ENCODE measurements at regions of chr5 and their contacts with region 1.

Region 1: DNA sequence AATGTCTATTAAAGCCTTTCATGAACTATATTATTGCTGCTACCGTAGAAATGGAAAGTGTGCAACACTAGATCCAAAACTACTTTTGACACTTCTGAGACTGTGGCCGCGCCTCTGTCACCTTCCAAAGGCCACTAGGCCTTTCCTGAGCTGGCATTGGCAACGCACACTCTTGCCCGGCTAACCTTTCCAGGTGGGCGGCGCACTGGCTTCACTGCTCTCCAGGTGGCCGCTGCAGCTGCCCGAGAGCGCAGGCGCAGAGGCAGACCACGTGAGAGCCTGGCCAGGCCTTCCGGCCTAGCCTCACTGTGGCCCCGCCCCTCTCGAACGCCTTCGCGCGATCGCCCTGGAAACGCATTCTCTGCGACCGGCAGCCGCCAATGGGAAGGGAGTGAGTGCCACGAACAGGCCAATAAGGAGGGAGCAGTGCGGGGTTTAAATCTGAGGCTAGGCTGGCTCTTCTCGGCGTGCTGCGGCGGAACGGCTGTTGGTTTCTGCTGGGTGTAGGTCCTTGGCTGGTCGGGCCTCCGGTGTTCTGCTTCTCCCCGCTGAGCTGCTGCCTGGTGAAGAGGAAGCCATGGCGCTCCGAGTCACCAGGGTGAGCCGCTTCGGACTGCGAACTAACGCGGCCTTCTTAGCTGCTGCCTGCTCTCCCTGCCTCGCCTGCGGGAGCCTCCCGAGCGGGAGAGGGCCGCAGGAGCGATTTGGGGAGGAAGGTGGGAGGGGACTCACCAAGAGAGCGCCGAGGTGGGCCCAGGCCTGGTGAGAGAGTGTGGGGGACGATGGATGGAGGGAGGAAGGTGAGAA is at the start of gene CCNB1:
- DNase-seq: peak; percentile 99
- total RNA-seq, gene CCNB1: 2.1 TPM

Region 2: GRCh38 chr5:69189162-69190086 is 22.5 kb after region 1 on chr5 and contains the start of gene CENPH:
- intact Hi-C with region 1: loop called (anchors 1 kb)
- DNase-seq: peak; percentile 95
- total RNA-seq, gene CENPH: 2.9 TPM

Region 3: GRCh38 chr5:69234457-69235268 is 67.8 kb after region 1 on chr5 and contains the start of gene CDK7:
- intact Hi-C with region 1: loop called (anchors 5 kb)
- DNase-seq: peak; percentile 98
- total RNA-seq, gene CDK7: 13.3 TPM

Measured in cardiac septum (tissue), 1 donor.